Mammary epithelial cell (primary cell): ENCODE measurements at regions of chr6 and their contacts with region 1.

Region 1: GRCh38 chr6:132279592-132280139 is 121.6 kb downstream of the MOXD1 start:
- DNase-seq: peak; percentile 53
- H3K4me3 ChIP-seq: peak overlapping the region; percentile 35 to 56 (median 53)
- H3K27ac ChIP-seq: no peak overlapping the region
- H3K4me1 ChIP-seq: no peaks in the 10 kb centered on the region
- H3K27me3 ChIP-seq: no peaks in the 10 kb centered on the region
- CTCF ChIP-seq: peak; percentile 76 to 81

Region 2: DNA sequence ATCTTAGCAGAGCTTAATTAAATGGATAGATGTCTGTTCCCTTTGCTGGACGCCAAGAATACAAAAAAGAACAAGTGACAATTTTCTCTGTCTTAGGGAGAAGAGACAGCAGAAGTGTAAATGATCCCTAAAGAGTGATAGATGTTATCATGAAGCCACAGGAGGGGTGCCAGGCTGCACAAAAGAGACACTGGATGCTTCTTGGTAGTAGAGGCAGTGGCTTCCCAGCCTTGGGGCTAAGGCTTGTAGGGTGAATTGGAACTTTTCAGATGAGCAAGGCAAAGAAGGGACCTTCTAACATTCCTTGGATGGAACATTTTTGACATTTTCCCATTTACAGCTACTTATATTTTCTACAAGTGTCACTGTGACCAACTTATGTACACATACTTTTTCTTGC is 386.5 kb before region 1 on chr6:
- CTCF ChIA-PET with region 1: interaction called, 10 read pairs
- dilution Hi-C with region 1: no loop called
- in situ Hi-C with region 1: no loop called
- intact Hi-C with region 1: no loop called
- DNase-seq: no peak
- H3K4me3 ChIP-seq: no peak overlapping the region
- H3K27ac ChIP-seq: no peak overlapping the region
- H3K4me1 ChIP-seq: no peaks in the 10 kb centered on the region
- H3K27me3 ChIP-seq: peaks cover 5% of the 10 kb centered on the region
- CTCF ChIP-seq: no peak

Region 3: DNA sequence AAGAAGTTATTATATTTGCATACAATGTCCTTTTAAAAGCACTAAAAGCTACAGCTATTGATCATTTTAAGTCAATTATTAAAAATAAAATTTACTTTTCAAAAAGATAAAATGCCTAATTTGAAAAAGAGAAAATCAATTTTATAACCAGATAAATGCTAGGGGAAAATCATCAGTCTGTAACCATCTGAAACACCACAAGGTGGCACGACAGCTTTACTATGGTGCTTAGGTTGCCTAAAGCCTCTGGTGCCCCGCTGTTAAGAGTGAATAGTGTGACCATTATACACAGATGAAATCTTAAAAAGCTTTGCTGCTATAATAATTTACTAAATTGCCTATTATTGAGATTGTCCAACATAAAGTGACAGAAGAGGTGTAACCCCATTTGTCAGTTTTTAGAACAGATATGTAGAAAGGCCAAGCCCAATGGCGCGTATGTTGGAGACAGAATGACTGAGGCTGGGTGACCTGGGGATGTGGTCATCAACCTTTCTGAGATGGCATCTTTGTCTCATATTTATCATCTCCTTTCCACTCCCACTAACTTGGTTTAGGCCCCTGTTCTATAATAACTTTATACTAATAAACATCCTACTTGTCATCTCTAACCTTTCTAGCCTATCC is 20.8 kb after region 1 on chr6:
- CTCF ChIA-PET with region 1: interaction called, 7 read pairs
- dilution Hi-C with region 1: no loop called
- in situ Hi-C with region 1: no loop called
- intact Hi-C with region 1: loop called (anchors 1 kb)
- DNase-seq: peak; percentile 39
- H3K4me3 ChIP-seq: no peak overlapping the region
- H3K27ac ChIP-seq: no peak overlapping the region
- H3K4me1 ChIP-seq: no peaks in the 10 kb centered on the region
- H3K27me3 ChIP-seq: no peaks in the 10 kb centered on the region
- CTCF ChIP-seq: peak; percentile 55 to 72

Region 4: DNA sequence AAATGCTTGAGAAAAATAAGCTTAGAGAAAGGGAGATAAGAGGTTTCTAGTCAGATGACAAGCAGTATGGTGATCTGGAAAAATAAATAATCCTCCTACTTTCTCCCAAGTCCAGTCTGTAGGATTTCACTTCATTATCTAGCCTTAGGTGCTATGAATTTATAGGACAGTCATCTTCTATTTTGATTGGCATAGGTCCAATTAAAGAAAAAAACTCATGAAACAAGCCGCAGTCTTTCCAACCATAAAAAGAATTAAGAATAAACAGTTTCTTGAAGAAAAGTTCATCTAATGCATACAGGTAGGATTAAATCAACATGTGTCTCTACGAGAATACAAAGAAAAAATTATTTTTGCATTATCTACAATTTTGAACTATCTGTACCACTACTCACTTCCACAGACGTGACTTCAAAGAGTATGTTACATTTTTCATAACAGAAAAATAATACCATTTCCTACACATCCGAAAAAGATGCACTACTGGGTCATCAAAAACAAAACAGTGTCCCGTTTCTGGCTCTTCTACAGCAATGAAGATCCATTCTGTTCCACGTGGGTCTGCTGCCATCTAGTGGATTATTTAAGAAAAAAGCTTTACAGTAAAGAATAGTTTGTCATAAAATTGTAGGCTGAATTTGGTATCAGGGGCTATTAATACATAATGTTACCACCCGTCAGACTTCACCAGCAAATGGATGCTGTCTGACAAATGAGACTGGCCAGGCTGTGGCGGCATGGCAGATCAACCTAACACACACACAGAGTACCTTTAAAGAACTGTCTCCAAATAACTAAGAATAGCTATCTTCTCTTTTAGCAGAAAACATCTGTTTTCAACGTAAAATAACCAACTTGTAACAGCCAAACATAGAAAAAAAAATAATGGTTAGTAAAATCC is 204.4 kb after region 1 on chr6:
- CTCF ChIA-PET with region 1: interaction called, 8 read pairs
- dilution Hi-C with region 1: loop called (anchors 25 kb)
- in situ Hi-C with region 1: no loop called
- intact Hi-C with region 1: loop called (anchors 1 kb)
- DNase-seq: peak; percentile 39
- H3K4me3 ChIP-seq: no peak overlapping the region
- H3K27ac ChIP-seq: no peak overlapping the region
- H3K4me1 ChIP-seq: peaks cover 6% of the 10 kb centered on the region
- H3K27me3 ChIP-seq: no peaks in the 10 kb centered on the region
- CTCF ChIP-seq: peak; percentile 63 to 68

Region 5: GRCh38 chr6:132715204-132715603 is 435.5 kb after region 1 on chr6:
- CTCF ChIA-PET with region 1: no interaction called
- dilution Hi-C with region 1: no loop called
- in situ Hi-C with region 1: no loop called
- intact Hi-C with region 1: loop called (anchors 5 kb)
- DNase-seq: peak; percentile 64
- H3K4me3 ChIP-seq: no peak overlapping the region
- H3K27ac ChIP-seq: no peak overlapping the region
- H3K4me1 ChIP-seq: no peaks in the 10 kb centered on the region
- H3K27me3 ChIP-seq: no peaks in the 10 kb centered on the region
- CTCF ChIP-seq: peak; percentile 69 to 78